Uterus (tissue), 4 donors: ENCODE measurements at regions of chr4 and their contacts with region 1.

Region 1: DNA sequence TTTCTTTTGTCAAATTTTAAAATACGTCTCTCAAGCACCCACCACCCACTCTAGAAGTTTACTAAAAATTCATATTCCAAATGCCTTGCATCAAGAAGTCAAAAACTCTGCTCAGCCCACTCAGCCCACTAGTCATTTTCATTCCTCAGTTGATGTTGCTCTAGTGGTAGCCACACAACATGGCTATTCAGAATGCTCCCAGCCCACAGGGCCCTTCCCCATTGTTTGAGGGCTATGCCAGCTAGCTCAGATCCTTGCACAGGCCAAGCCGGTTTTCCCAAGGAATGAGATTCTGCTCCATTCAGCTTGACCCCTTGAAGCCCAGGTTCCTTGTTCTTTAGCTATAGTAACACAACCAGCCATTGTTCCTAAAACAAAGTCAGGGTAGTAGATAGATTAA is 297.5 kb upstream of the RASGEF1B start:
- DNase-seq: no peak
- H3K4me3 ChIP-seq: no peak overlapping the region
- H3K27ac ChIP-seq: no peak overlapping the region
- H3K4me1 ChIP-seq: no peaks in the 10 kb centered on the region
- H3K27me3 ChIP-seq: no peaks in the 10 kb centered on the region
- CTCF ChIP-seq: no peak
- POLR2A ChIP-seq: no peak

Region 2: DNA sequence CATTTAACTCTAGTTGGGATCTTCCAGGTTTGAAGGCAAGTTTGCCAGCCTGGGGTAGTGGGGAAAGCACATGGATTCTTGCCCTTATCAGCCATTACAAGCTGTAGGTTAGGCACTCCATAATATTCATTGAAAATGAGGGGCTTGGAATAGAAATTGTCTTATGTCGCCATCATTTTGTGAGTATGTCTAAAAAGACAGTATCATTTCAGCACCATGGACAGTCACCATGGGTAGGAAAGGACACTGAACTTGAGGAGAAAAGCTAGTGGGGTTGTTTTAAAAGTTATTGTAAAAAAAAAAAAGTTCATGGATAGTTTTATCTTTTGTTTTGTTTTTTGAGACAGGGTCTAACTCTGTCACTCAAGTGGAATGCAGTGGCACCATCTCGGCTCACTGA is 248.4 kb after region 1 on chr4:
- intact Hi-C with region 1: loop called (anchors 10 kb)
- DNase-seq: no peak
- H3K4me3 ChIP-seq: no peak overlapping the region
- H3K27ac ChIP-seq: no peak overlapping the region
- H3K4me1 ChIP-seq: no peaks in the 10 kb centered on the region
- H3K27me3 ChIP-seq: no peaks in the 10 kb centered on the region
- CTCF ChIP-seq: no peak
- POLR2A ChIP-seq: no peak